RWPE1 (cell line): ENCODE measurements at regions of chr5 and their contacts with region 1.

Region 1: DNA sequence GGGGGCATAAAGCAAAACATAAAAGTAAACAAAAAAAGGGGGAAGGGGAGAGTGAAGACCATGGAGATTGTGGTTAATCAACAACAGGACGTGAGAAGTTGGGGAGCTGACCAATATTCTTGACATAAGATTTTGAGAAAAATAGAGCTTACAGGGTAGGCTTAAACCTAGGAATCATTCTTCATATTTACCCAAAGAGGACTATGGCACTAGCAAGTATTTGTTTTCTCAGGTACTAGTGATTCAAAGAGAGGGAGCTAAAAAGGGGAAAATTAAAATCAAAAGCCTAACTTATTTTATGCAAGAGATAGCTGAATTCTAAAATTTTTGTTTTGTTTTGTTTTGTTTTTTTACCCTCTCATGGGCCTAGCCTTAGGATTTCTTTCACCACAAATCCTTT is 427.5 kb downstream of the PIK3R1 start:
- DNase-seq: no peak
- H3K27ac ChIP-seq: no peak overlapping the region
- CTCF ChIP-seq: no peak

Region 2: GRCh38 chr5:68287976-68288706 is 354.9 kb before region 1 on chr5:
- CTCF ChIA-PET with region 1: no interaction called
- POLR2A ChIA-PET with region 1: no interaction called
- DNase-seq: peak; percentile 48
- H3K27ac ChIP-seq: peak overlapping the region; percentile 85
- CTCF ChIP-seq: no peak

Region 3: DNA sequence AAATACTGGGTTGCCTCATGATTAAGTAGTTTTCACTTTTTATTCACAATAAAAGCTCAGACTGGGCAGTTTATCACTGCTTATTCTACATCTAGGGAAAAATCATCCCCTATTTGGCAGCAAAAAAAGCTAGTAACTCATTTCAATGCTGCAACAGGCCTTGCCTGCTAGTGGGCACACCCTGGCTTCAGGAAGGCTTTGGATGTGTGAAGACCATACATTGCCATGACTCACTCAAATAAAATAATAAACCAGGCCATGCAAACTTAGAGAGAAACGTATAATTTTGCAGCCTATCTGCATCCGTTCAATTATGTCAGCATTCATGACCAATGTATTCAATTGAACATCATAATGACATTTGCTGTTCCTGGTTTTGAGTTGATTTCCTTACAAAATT is 24.6 kb before region 1 on chr5:
- CTCF ChIA-PET with region 1: no interaction called
- POLR2A ChIA-PET with region 1: no interaction called
- DNase-seq: no peak
- H3K27ac ChIP-seq: no peak overlapping the region
- CTCF ChIP-seq: no peak

Region 4: GRCh38 chr5:68657048-68657961 is 14.2 kb after region 1 on chr5:
- CTCF ChIA-PET with region 1: interaction called, 10 read pairs
- POLR2A ChIA-PET with region 1: no interaction called
- DNase-seq: peak; percentile 29
- H3K27ac ChIP-seq: no peak overlapping the region
- CTCF ChIP-seq: no peak